ENCODE measurements at regions of chr2 and their contacts with region 1.

Region 1: GRCh38 chr2:44955593-44956392 is 14.3 kb downstream of the SIX3 start:
- DNase-seq: peak; percentile 81
- ATAC-seq: peak; percentile 84
- H3K4me3 Mint-ChIP-seq: peak overlapping the region; percentile 39
- H3K27ac Mint-ChIP-seq: no peak overlapping the region
- H3K4me1 Mint-ChIP-seq: peaks cover 14% of the 10 kb centered on the region
- H3K27me3 Mint-ChIP-seq: peaks cover 48% of the 10 kb centered on the region
- CTCF ChIP-seq: peak; percentile 83

Region 2: DNA sequence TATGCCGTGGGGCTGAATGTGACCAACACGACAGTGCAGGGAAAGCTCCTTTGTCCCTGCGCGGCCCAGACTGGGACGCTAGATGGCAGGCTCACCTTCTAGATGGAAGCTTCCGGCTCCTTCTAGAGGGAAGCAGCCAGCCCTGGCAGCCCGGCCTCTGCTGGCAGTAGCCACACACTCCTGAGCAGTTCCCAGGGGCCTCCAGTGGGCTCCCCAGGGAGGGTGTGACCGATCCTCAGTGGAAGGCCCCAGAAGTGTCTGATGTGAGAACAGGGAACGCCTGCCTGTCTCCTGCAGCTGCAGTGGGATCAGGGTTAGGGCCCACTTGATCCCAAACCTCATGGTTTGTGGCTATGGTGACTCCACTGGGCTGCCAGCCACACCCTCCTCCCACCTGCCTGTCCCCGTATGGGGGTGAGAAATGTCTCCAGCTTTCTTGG is 911.5 kb before region 1 on chr2:
- CTCF ChIA-PET with region 1: interaction called, 9 read pairs
- POLR2A ChIA-PET with region 1: no interaction called
- intact Hi-C with region 1: loop called (anchors 10 kb)
- DNase-seq: peak; percentile 91
- ATAC-seq: peak; percentile 100
- H3K4me3 Mint-ChIP-seq: no peak overlapping the region
- H3K27ac Mint-ChIP-seq: no peak overlapping the region
- H3K4me1 Mint-ChIP-seq: no peaks in the 10 kb centered on the region
- H3K27me3 Mint-ChIP-seq: peaks cover 2% of the 10 kb centered on the region
- CTCF ChIP-seq: peak; percentile 84

Region 3: DNA sequence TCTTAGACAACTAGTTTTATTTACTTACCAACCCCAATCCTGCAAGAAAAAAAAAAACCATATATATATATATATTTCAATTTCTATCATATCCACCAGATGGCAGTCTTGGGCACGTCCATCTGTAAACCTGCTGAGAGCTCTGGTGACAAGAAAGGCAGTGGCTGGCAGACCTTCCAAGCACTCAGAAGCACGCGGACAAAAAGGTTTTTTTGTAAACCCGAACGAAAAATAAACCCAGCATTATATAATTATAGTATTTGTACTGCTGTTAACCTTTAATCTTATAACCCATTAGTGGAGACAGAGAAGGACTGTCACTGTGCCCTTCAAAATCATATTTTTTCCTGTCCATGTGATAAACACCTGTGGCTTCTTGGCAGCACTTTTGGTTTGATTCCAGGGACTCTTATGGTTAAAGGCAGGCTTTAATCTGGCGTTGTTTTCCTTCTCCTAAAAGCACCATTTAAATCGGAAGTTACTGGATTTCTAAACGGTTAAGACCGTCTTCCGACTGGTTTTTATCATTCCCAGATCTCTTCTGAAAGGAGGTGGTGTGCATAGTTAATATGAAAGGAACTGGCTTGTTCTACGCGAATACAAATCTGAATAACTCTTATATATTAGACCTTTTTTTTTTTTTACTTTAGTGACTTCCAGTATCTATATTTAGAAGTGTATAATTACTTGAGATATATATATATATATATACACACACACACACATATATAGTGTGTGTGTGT is 711.5 kb before region 1 on chr2:
- CTCF ChIA-PET with region 1: no interaction called
- POLR2A ChIA-PET with region 1: no interaction called
- intact Hi-C with region 1: loop called (anchors 10 kb)
- DNase-seq: peak; percentile 67
- ATAC-seq: peak; percentile 92
- H3K4me3 Mint-ChIP-seq: peak overlapping the region; percentile 73
- H3K27ac Mint-ChIP-seq: peak overlapping the region; percentile 71
- H3K4me1 Mint-ChIP-seq: peaks cover 16% of the 10 kb centered on the region
- H3K27me3 Mint-ChIP-seq: no peaks in the 10 kb centered on the region
- CTCF ChIP-seq: peak; percentile 70

Region 4: GRCh38 chr2:44392338-44392943 is 563.4 kb before region 1 on chr2:
- CTCF ChIA-PET with region 1: interaction called, 82 read pairs
- POLR2A ChIA-PET with region 1: no interaction called
- intact Hi-C with region 1: loop called (anchors 5 kb)
- DNase-seq: peak; percentile 72
- ATAC-seq: no peak
- H3K4me3 Mint-ChIP-seq: no peak overlapping the region
- H3K27ac Mint-ChIP-seq: no peak overlapping the region
- H3K4me1 Mint-ChIP-seq: peaks cover 9% of the 10 kb centered on the region
- H3K27me3 Mint-ChIP-seq: no peaks in the 10 kb centered on the region
- CTCF ChIP-seq: peak; percentile 75

Region 5: GRCh38 chr2:44560352-44560751 is 395.4 kb before region 1 on chr2:
- CTCF ChIA-PET with region 1: interaction called, 9 read pairs
- POLR2A ChIA-PET with region 1: no interaction called
- intact Hi-C with region 1: loop called (anchors 10 kb)
- DNase-seq: peak; percentile 53
- ATAC-seq: no peak
- H3K4me3 Mint-ChIP-seq: no peak overlapping the region
- H3K27ac Mint-ChIP-seq: no peak overlapping the region
- H3K4me1 Mint-ChIP-seq: no peaks in the 10 kb centered on the region
- H3K27me3 Mint-ChIP-seq: no peaks in the 10 kb centered on the region
- CTCF ChIP-seq: peak; percentile 42

Region 6: DNA sequence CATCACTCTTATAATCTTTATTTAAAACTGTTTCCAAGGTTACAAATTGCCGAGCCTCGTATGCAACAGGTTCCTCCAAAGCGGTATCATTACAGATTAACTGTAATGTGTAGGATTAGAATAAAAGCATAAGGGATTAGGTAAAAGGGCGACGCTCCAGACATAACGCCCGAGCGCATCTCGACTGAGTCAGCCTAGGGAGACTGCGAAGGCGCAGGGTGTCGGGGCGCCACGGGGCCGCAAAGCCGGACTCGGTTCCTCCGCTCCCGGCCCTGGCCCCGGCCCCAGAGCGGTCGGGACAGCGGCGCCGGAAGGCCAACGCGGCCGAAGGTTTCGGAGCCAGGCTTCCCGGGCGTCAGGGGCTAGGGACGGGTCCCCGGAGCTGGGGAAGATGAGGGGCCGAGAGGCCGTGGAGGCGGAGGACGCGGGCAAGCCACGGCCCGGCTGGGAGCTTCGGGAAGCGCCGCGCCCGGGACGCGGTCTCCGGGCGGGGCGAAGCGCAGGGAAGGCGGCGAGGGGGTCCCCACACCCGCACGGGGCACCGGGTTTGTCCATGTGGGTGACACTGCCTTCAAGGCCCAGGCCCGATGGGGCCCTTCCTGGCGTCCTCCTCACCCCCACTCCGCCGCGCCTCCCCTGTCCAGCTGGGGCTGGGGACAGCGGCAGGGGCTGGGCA is 27.2 kb before region 1 on chr2:
- CTCF ChIA-PET with region 1: interaction called, 26 read pairs
- POLR2A ChIA-PET with region 1: no interaction called
- intact Hi-C with region 1: no loop called
- DNase-seq: no peak
- ATAC-seq: no peak
- H3K4me3 Mint-ChIP-seq: no peak overlapping the region
- H3K27ac Mint-ChIP-seq: no peak overlapping the region
- H3K4me1 Mint-ChIP-seq: peaks cover 16% of the 10 kb centered on the region
- H3K27me3 Mint-ChIP-seq: peaks cover 76% of the 10 kb centered on the region
- CTCF ChIP-seq: no peak

Region 7: GRCh38 chr2:44974064-44974715 is 18.4 kb after region 1 on chr2:
- CTCF ChIA-PET with region 1: interaction called, 19 read pairs
- POLR2A ChIA-PET with region 1: no interaction called
- intact Hi-C with region 1: no loop called
- DNase-seq: no peak
- ATAC-seq: no peak
- H3K4me3 Mint-ChIP-seq: no peak overlapping the region
- H3K27ac Mint-ChIP-seq: no peak overlapping the region
- H3K4me1 Mint-ChIP-seq: peaks cover 4% of the 10 kb centered on the region
- H3K27me3 Mint-ChIP-seq: peaks cover 1% of the 10 kb centered on the region
- CTCF ChIP-seq: peak; percentile 32

Measured in activated CD8-positive, alpha-beta T cell treated with anti-CD3 and anti-CD28 coated beads for 36 hours (primary cell).